K562 (cell line): ENCODE measurements at regions of chr1 and their contacts with region 1.

Region 1: GRCh38 chr1:151739590-151740375 is 18.5 kb downstream of the RIIAD1 start:
- DNase-seq: peak in 2 of 4 experiments; percentile 73 to 78
- ATAC-seq: peak; percentile 37
- H3K4me3 ChIP-seq: no peak overlapping the region
- H3K27ac ChIP-seq: 0 out of 3 replicates have a peak overlapping the region, but pooled peaks have one; percentile 12
- H3K4me1 ChIP-seq: peaks cover 4 to 9% of the 10 kb centered on the region in 2 experiments; a peak in 4 of 5 replicates
- H3K27me3 ChIP-seq: no peaks in the 10 kb centered on the region
- CTCF ChIP-seq: no peak
- EP300 ChIP-seq: peak; percentile 75
- POLR2A ChIP-seq: no peak
- RAD21 ChIP-seq: no peak

Region 2: DNA sequence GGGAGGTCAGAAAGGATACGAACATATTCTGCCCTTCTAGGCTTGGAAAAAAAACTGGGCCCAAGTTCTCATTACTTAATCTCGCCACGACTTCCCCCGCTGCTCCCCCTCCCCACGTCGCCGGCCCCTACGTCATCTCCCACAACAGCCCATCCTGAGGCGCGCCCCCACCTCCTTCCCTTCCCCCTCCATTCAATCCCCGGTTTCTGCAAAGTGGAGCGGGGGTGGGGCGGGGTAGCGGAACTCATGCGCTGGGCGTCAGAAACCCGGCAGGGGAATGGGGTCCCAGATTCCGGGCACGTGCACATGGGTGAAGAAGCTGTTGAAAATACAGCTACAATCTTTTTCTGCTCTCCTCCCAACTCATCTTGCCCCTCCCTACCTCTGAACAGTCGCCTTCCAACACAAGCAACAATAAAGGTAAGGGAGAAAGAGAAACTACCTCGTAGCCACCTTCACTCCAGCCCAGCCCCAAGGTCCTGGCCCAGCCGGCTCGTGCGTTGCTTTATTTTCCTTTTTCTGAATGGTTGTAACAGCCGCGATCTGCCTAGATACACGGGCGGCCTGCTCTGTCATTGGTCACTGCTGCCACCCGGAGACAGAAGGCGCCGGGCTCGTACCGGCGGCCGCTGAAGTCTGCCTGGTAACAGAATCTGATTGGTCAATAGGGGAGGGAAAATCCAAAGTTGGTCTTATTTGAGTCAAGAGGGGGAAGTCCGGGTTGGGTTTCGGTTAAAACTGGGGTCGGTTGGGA is 392.8 kb before region 1 on chr1 and contains the start of gene RFX5:
- CTCF ChIA-PET with region 1: no interaction called
- POLR2A ChIA-PET with region 1: no interaction called
- in situ Hi-C with region 1: no loop called
- intact Hi-C with region 1: loop called (anchors 10 kb)
- DNase-seq: peak; percentile 96 to 97 (median 97)
- ATAC-seq: peak; percentile 99
- H3K4me3 ChIP-seq: peak within 1 kb of the TSS; percentile 54
- H3K27ac ChIP-seq: peak within 1 kb of the TSS; percentile 95
- H3K4me1 ChIP-seq: peaks cover 0 to 13% of the 10 kb centered on the region in 2 experiments; a peak in 3 of 5 replicates
- H3K27me3 ChIP-seq: no peaks in the 10 kb centered on the region
- CTCF ChIP-seq: no peak
- EP300 ChIP-seq: peak; percentile 5
- POLR2A ChIP-seq: peak; percentile 82
- RAD21 ChIP-seq: no peak
- polyA plus RNA-seq, gene RFX5: 3.8 to 4.9 TPM

Region 3: DNA sequence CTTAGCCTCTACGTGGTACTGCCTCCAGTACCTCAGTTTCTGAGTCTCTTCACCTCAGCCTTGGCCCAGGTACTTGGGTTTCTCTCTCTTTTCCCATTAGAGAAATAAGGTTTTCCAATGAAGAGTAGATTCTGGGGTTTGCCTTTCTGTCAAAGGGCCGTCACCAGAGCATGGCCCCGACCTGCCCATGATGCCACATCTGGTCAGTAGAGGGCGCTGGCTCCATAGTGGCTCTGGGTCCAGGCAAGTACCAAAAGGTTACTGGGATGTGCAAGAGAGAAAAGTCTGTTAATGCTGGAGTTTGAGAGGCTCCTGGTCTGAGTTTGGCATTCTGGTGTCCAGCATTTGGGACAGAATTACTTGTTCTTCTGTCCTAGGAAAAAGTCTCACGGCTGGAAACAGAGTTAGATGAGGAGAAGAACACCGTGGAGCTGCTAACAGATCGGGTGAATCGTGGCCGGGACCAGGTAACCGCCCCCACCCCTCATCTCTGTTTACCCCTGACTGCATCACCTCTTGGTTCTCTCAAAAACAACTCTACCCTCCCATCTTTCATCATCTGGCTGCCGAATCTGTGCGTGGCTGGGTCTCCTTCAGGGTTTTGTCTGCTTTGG is 205.0 kb before region 1 on chr1:
- CTCF ChIA-PET with region 1: interaction called, 3 read pairs
- POLR2A ChIA-PET with region 1: interaction called, 4 read pairs
- in situ Hi-C with region 1: loop called (anchors 5 kb)
- intact Hi-C with region 1: loop called (anchors 1 kb)
- DNase-seq: peak; percentile 76 to 84 (median 80)
- ATAC-seq: peak; percentile 86
- H3K4me3 ChIP-seq: no peak overlapping the region
- H3K27ac ChIP-seq: no peak overlapping the region
- H3K4me1 ChIP-seq: peaks cover 7 to 17% of the 10 kb centered on the region in 2 experiments; a peak in 4 of 5 replicates
- H3K27me3 ChIP-seq: peaks cover 17 to 20% of the 10 kb centered on the region in 2 experiments; a peak in 4 of 5 replicates
- CTCF ChIP-seq: peak; percentile 89 to 95 (median 95)
- EP300 ChIP-seq: no peak
- POLR2A ChIP-seq: no peak
- RAD21 ChIP-seq: peak; percentile 87 to 90

Region 4: DNA sequence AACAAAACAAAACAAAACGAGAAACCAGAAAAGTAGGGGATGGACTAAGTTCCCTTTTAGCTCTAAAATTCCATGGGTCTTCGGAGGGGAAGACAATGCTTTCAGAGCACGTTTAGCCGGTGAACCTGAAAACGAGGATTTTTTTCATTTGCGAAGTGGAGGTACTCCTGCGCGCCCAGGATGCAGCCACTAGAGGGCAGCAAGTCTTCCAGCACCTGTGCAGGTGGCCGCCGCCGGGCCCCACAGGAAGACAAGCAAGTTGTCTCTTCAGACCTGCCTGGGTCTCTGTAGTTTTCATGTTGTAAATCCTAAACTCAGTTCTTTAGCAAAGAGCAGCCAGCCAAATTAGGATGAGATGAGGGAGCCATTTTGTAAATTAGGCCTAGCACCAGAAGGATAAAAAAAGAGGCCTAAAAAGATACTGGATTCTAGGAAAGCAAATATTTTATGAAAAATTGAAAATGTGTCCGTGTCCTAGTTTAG is 145.6 kb before region 1 on chr1:
- CTCF ChIA-PET with region 1: no interaction called
- POLR2A ChIA-PET with region 1: no interaction called
- in situ Hi-C with region 1: no loop called
- intact Hi-C with region 1: loop called (anchors 2 kb)
- DNase-seq: peak; percentile 74 to 83 (median 78)
- ATAC-seq: peak; percentile 91
- H3K4me3 ChIP-seq: no peak overlapping the region
- H3K27ac ChIP-seq: no peak overlapping the region
- H3K4me1 ChIP-seq: peaks cover 11 to 20% of the 10 kb centered on the region in 2 experiments
- H3K27me3 ChIP-seq: no peaks in the 10 kb centered on the region
- CTCF ChIP-seq: peak; percentile 89 to 97 (median 89)
- EP300 ChIP-seq: no peak
- POLR2A ChIP-seq: no peak
- RAD21 ChIP-seq: peak; percentile 59 to 81

Region 5: GRCh38 chr1:151783424-151784195 is 43.8 kb after region 1 on chr1:
- CTCF ChIA-PET with region 1: no interaction called
- POLR2A ChIA-PET with region 1: no interaction called
- in situ Hi-C with region 1: no loop called
- intact Hi-C with region 1: no loop called
- DNase-seq: no peak
- ATAC-seq: peak; percentile 42; the same call in 1 of the 3 replicates
- H3K4me3 ChIP-seq: no peak overlapping the region
- H3K27ac ChIP-seq: no peak overlapping the region
- H3K4me1 ChIP-seq: peaks cover 0 to 16% of the 10 kb centered on the region in 2 experiments; a peak in 3 of 5 replicates
- H3K27me3 ChIP-seq: no peaks in the 10 kb centered on the region
- CTCF ChIP-seq: no peak
- EP300 ChIP-seq: no peak
- POLR2A ChIP-seq: no peak
- RAD21 ChIP-seq: no peak

Region 6: DNA sequence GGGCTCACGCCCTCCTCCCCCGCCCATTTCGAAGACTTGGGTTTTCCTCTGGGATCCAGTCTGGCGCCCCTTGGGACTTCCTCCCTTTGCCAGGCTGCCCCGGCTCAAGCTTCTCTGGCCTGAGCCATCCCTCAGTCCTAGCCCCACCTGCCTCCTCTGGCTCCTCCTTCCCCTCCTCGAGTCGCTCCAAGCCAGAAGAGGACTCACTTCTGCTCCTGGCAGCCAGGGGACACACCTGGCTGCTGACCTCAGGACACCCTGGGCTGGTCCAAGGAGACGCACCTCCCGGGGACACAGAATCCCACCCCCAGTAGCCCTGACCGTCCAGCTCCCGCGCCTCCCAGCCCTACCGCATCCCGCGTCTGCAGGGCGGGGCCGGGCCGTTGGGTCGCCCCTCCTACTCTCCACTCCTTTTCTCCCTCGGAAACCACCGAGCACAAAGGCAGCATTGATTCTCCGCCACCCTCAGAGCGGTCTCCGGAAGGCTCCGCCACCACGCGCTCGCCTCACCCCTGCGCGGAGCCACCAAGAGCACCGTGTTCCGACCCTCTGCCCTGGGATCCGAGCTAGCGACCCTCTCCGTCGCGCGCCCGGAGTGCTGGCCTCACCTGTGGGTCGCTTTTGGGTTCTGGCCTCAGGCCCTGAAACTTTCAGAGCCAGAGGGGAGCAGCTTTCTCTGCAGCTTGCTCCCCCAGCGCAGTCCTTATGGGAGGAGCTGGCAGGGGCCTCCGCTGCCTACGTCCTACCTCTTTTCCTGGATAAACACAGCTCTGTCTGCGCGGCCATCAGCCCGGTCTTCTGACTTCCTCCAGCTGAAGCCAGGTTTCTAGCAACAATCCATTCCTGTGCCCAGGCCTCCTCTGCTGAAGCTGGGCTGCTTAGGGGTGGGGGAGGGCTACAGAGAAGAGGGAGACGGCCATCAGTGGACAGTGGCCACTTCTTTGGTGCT is 99.9 kb after region 1 on chr1 and contains the start of gene C2CD4D:
- CTCF ChIA-PET with region 1: interaction called, 7 read pairs
- POLR2A ChIA-PET with region 1: no interaction called
- in situ Hi-C with region 1: no loop called
- intact Hi-C with region 1: loop called (anchors 2 kb)
- DNase-seq: peak in 2 of 4 experiments; percentile 31 to 39
- ATAC-seq: no peak
- H3K4me3 ChIP-seq: no peak within 1 kb of the TSS
- H3K27ac ChIP-seq: no peak within 1 kb of the TSS
- H3K4me1 ChIP-seq: peaks cover 0 to 13% of the 10 kb centered on the region in 2 experiments; a peak in 2 of 5 replicates
- H3K27me3 ChIP-seq: peaks cover 4 to 12% of the 10 kb centered on the region in 2 experiments; a peak in 3 of 5 replicates
- CTCF ChIP-seq: no peak
- EP300 ChIP-seq: no peak
- POLR2A ChIP-seq: no peak
- RAD21 ChIP-seq: no peak
- polyA plus RNA-seq, gene C2CD4D: not detected